Activated naive CD4-positive, alpha-beta T cell treated with anti-CD3 and anti-CD28 coated beads for 36 hours (primary cell): ENCODE measurements at regions of chr12 and their contacts with region 1.

Region 1: DNA sequence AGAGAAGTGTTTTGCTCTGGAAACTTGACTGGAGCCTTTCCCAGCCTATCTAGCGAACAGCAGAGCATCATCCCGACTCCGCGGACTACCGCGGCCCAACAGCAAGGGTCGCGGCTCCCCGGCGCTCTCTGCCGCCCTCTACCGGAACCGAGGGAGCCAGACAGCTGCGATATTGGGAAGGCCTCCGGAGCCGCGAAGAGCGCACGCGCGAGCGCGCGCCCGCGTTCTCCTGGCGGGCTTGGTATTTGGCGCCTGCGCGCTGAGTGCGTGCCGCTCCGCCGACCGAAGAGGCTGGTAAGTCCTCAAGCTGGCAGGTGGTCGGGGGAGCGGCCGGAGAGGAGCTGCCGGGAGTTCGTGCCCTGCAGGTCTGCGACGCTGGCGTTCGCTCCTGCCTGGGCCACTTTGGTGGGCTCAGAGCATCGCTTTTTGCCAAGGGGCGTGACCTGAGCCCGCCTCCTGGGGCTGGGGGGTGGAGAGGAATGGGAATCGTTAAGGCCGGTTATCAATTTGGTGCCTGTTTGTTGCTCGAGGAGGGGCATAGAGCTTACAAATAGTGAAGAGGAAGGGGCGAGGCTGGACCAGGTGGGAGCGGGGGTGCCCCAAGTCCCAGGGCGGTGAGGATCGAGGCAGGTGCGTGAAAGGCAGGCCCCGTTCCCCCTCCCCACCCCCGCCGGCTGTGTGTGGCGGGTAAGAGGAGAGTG is at the start of gene TMEM106C:
- DNase-seq: peak; percentile 94
- H3K4me3 Mint-ChIP-seq: peak within 1 kb of the TSS; percentile 98
- H3K27ac Mint-ChIP-seq: peak within 1 kb of the TSS; percentile 79
- H3K4me1 Mint-ChIP-seq: peaks cover 30% of the 10 kb centered on the region
- H3K27me3 Mint-ChIP-seq: peaks cover 7% of the 10 kb centered on the region
- total RNA-seq, gene TMEM106C: 226 to 247 TPM

Region 2: DNA sequence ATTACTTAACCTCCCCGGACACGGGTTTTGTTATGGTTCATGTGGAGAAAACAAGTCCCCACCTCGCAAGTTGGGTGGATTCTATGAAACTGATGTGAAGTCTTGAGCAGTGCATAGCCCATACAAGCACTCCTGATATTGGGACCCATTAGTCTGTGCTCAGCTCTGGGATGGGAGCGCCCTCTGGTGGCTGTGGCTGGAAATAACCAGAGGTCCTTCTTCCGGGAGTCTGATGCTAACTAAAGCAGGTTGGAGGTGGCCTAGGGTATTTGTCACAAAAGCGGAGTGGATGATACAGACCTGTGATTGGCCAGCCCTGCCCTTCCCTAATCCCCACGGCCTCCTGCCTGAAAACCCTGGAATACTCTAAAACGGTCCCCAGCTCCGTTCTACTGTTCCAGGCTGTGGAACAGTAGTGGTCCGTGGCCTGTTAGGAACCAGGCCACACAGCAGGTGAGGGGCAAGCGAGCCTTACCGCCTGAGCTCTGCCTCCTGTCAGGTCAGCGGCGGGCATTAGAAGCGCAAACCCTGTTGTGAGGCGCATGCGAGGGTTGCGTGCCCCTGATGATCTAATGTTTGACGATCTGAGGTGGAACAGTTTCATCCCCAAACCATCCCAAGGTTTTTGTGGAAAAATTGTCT is 184.1 kb before region 1 on chr12:
- CTCF ChIA-PET with region 1: no interaction called
- intact Hi-C with region 1: loop called (anchors 1 kb)
- DNase-seq: peak; percentile 97
- H3K4me3 Mint-ChIP-seq: no peak overlapping the region
- H3K27ac Mint-ChIP-seq: peak overlapping the region; percentile 18
- H3K4me1 Mint-ChIP-seq: peaks cover 30% of the 10 kb centered on the region
- H3K27me3 Mint-ChIP-seq: no peaks in the 10 kb centered on the region

Region 3: DNA sequence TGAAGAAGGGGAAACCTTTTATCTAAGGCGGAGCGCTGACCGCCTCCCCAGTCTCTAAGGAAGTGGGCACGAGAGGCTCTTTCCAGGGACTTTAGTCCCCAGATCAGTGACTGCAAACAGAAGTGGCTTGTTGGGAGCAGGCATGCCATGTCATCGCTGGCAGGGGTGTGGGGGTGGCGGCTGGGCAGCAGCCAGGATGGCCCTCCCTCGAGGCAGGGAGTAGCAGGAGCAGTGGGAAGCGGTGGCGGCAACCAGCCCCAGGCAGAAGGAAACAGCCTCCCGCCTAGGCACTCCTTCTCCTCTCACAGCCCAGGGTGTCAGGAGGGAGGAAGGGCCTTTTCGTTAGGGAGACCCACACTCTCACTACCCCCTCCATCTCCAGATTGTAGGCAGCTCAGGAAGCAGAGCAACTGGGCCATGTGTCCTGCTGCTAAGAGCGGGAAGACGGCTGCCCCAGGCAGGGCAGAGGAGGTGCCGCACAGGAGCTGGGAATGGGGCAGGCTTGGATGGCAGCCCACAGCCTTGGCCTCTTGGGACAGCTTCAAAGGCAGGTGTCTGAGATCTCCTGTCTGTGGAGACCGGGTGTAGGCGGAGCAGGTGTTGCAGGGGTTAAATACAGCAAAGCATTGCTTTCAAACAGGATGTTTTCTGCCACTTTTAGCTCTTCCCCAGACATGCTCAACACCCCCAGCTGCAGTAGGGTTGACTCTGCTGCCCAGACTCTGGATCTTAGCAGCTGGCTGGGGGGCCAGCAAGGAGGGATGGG is 80.5 kb before region 1 on chr12:
- CTCF ChIA-PET with region 1: interaction called, 13 read pairs
- intact Hi-C with region 1: loop called (anchors 1 kb)
- DNase-seq: peak; percentile 73
- H3K4me3 Mint-ChIP-seq: peak overlapping the region; percentile 78
- H3K27ac Mint-ChIP-seq: peak overlapping the region; percentile 97
- H3K4me1 Mint-ChIP-seq: peaks cover 69% of the 10 kb centered on the region
- H3K27me3 Mint-ChIP-seq: no peaks in the 10 kb centered on the region

Region 4: GRCh38 chr12:47949441-47950308 is 13.8 kb before region 1 on chr12:
- CTCF ChIA-PET with region 1: interaction called, 17 read pairs
- intact Hi-C with region 1: no loop called
- DNase-seq: peak; percentile 72
- H3K4me3 Mint-ChIP-seq: no peak overlapping the region
- H3K27ac Mint-ChIP-seq: no peak overlapping the region
- H3K4me1 Mint-ChIP-seq: peaks cover 4% of the 10 kb centered on the region
- H3K27me3 Mint-ChIP-seq: no peaks in the 10 kb centered on the region

Region 5: DNA sequence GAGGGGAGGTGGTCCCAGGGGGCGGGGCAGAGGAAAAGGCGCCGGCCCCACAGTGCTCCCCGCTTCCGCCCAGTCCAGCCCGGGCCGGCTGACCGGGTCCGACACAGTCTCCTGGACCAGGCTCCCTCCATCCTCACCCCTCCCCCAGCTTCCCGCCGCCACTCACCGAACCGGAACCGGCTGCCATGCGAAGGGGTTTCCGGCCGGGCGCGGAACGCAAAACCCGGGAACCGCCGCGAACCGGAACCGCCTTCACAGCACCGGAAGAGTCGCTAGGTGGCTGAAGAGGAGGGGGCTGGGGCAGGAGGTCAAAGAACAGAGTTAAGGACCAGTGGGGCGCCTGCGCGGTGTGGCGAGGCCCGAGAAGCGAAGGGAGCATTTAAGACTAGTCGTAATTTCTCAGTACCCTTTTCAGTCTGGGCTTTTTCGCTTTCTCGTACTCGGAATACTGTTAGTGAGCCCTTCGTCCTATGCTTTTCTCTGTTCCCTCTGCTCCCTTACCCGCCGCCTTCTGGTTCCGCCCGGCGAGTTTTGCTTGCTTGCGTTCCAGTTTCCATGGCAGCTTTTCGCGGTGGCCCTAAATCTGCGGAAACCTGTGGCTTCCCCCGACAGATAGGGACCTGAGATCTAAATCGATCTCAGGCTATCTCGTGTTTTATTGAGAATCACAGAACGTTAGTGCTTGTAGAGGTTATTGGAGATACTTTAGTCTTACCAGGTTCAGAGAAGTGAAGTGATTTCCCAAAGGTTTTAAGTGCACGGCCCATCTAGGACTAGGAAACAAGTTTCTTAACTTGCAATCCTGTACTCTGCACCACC is 142.6 kb after region 1 on chr12 and contains the start of gene SENP1:
- CTCF ChIA-PET with region 1: no interaction called
- intact Hi-C with region 1: loop called (anchors 5 kb)
- DNase-seq: peak; percentile 94
- H3K4me3 Mint-ChIP-seq: peak within 1 kb of the TSS; percentile 87
- H3K27ac Mint-ChIP-seq: peak within 1 kb of the TSS; percentile 96
- H3K4me1 Mint-ChIP-seq: peaks cover 47% of the 10 kb centered on the region
- H3K27me3 Mint-ChIP-seq: no peaks in the 10 kb centered on the region
- total RNA-seq, gene SENP1: 41.4 to 47.8 TPM

Region 6: DNA sequence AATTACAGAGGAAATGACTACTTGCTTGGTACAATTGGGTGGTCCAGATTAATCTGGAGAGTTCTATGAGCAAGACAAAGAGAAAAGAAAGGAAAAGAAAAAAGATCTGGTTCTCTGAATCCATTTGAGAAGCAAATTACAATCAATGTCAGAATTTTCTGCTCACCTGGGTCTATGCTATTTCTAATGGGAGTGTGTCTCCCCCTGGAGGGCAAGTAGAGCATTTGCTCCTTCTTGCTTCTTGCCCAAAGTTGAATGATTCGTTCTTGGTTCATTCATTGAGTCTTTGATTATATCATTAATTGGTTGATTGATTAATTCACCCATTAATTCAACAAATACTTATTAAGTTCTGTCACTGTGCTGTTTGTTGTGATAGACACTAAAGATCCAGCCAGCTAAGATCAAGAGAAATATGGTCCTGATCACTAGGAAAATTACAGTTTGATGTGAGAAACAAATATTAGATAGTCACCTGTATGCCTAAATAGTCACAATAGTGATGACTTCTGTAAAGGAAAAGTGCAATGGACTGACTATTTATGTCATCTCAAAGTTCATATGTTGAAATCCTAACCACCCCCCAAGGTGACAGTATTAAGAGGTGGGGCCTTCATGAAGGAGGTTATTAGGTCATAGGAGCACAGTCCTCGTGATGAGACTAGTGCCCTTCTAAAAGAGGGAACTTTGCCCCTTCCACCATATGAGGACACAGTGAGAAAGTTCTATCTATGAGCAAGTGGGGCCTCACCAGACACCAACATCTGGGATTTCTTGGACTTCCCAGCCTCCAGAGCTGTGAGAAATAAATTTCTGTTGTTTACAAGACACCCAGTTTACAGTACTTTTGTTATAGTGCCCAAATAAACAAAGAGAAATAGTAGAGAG is 201.8 kb after region 1 on chr12:
- CTCF ChIA-PET with region 1: interaction called, 7 read pairs
- intact Hi-C with region 1: loop called (anchors 1 kb)
- DNase-seq: peak; percentile 72
- H3K4me3 Mint-ChIP-seq: no peak overlapping the region
- H3K27ac Mint-ChIP-seq: no peak overlapping the region
- H3K4me1 Mint-ChIP-seq: peaks cover 9% of the 10 kb centered on the region
- H3K27me3 Mint-ChIP-seq: no peaks in the 10 kb centered on the region

Region 7: DNA sequence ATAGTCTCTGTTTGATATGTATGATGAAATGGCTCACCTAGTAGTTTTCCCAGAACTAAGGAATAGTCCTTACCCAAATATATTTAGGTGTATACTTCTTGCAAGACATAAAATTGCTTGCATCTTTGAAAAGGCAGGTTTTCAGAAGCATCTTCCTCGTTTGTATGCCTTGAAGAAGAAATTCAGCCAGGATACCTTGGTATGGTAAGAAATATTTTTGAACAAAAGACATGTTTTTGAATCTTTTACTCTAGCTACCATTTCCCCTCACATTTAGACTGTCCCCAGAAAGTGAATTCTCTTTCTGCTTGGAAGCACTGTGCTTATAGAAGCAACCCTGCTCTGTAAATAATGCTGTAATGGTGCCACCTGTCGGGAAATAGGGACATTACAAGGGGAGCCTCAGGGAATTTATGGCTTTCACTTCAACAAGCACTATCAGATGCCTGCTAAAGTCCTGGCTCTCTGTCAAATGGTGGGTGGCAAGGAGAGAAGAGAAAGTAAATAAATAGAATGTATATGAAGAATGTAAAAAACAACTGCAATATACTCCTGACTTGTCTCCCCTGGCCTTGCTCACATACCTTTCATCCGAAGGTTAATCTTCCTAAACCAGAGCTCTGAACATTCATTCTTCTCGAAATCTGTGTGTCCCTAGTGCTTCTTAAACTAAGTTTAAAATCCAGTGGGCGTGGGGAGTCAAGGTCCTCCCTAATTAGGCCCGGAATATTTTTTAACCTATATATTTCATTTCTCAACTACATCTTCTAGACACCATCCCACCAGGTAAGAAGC is 226.0 kb after region 1 on chr12:
- CTCF ChIA-PET with region 1: no interaction called
- intact Hi-C with region 1: loop called (anchors 1 kb)
- DNase-seq: peak; percentile 87
- H3K4me3 Mint-ChIP-seq: no peak overlapping the region
- H3K27ac Mint-ChIP-seq: no peak overlapping the region
- H3K4me1 Mint-ChIP-seq: peaks cover 3% of the 10 kb centered on the region
- H3K27me3 Mint-ChIP-seq: peaks cover 13% of the 10 kb centered on the region